ENCODE measurements at regions of chr3 and their contacts with region 1.

Region 1: DNA sequence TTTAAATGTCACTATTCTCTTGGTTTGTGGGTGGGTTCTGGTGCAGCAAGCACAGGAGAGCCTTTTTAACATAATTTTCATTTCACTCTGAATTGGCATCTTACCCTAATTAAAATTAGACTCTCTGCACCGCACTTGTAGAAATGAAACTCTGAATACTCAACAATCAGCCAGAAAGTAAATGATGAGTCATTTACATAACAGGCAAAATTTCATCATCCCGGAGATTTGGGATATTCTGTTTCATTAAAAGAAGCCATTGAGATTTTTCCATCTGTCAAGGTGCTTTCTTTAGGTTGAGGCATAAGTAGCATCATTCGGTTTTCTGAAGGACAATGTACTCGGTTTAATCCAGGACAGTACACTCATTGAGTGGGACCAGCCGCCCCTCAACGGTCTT is 111.0 kb downstream of the RFTN1 start:
- DNase-seq: no peak
- H3K4me3 ChIP-seq: no peak overlapping the region
- H3K27ac ChIP-seq: no peak overlapping the region
- H3K4me1 ChIP-seq: peaks cover 0 to 6% (median 0%) of the 10 kb centered on the region in 4 donors
- H3K27me3 ChIP-seq: no peaks in the 10 kb centered on the region
- CTCF ChIP-seq: no peak
- EP300 ChIP-seq: no peak
- POLR2A ChIP-seq: no peak

Region 2: GRCh38 chr3:16429086-16429485 is 26.6 kb after region 1 on chr3:
- in situ Hi-C with region 1: no loop called
- intact Hi-C with region 1: loop called (anchors 1 kb)
- DNase-seq: no peak
- H3K4me3 ChIP-seq: no peak overlapping the region
- H3K27ac ChIP-seq: peak overlapping the region in 2 of 4 donors; percentile 27 to 36
- H3K4me1 ChIP-seq: no peaks in the 10 kb centered on the region
- H3K27me3 ChIP-seq: no peaks in the 10 kb centered on the region
- CTCF ChIP-seq: no peak
- EP300 ChIP-seq: no peak
- POLR2A ChIP-seq: no peak